ENCODE measurements at regions of chr19 and their contacts with region 1.

Region 1: DNA sequence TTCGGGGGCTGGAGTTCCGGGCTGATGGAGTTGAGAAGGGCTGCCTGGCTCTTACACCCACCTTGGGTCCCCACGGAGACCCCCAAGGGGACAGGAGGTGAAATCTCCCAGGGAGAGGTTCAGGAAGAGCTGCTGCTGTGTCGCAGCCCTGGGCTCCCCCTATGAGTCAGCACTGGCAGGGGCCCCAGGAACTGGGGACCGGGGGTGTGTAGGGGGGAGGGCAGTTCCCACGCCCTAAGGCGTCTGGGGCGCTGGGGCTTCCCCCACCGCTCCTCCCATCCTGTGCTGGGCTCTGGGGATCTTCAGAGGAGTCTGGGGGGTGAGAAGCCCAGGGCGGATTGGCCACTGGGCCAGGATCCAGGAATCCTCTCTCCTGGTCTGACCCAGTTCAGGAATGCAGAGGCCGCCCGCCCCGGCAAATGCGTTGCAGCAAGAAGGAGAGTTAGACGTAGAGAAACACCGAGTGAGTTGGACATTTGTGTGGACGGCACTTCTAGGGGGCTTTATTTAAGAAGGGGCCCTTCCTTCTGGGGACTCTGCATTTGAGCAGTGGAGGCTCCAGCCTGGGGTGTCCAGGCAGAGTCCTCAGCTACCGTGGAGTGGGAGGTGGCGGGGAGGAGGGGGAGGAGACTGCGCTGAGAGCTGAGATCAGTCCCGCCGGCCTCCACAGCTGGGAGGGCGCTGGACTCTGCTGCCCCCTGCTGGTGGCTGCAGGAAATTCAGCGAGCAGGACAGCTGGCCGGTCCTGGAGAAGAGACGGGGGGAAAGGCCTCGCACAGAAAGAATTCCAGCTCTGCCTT is 15.0 kb upstream of the NANOS3 start:
- DNase-seq: peak; percentile 72 to 93 (median 84)
- ATAC-seq: peak; percentile 87 to 89 (median 88)
- H3K4me3 ChIP-seq: peak overlapping the region; percentile 66 to 82
- H3K4me3 Mint-ChIP-seq: peak overlapping the region; percentile 84 to 90 (median 86)
- H3K27ac ChIP-seq: peak overlapping the region; percentile 99
- H3K27ac Mint-ChIP-seq: peak overlapping the region; percentile 88 to 92
- H3K4me1 ChIP-seq: peaks cover 3 to 42% of the 10 kb centered on the region in 2 experiments
- H3K4me1 Mint-ChIP-seq: peaks cover 39 to 47% (median 47%) of the 10 kb centered on the region in 3 donors
- H3K27me3 ChIP-seq: peaks cover 0 to 31% of the 10 kb centered on the region in 2 experiments
- H3K27me3 Mint-ChIP-seq: peaks cover 15 to 22% of the 10 kb centered on the region in 2 donors

Region 2: GRCh38 chr19:13774217-13775191 is 87.4 kb before region 1 on chr19 and contains the start of gene C19orf53:
- CTCF ChIA-PET with region 1: interaction called, 4 to 13 read pairs
- POLR2A ChIA-PET with region 1: no interaction called
- DNase-seq: peak; percentile 70 to 92 (median 82)
- ATAC-seq: peak; percentile 95 to 99 (median 99)
- H3K4me3 ChIP-seq: peak within 1 kb of the TSS; percentile 69 to 87
- H3K4me3 Mint-ChIP-seq: peak within 1 kb of the TSS; percentile 96 to 100 (median 98)
- H3K27ac ChIP-seq: peak within 1 kb of the TSS; percentile 67
- H3K27ac Mint-ChIP-seq: peak within 1 kb of the TSS; percentile 92 to 97
- H3K4me1 ChIP-seq: peaks cover 9 to 27% of the 10 kb centered on the region in 2 experiments
- H3K4me1 Mint-ChIP-seq: peaks cover 25 to 29% (median 28%) of the 10 kb centered on the region in 3 donors
- H3K27me3 ChIP-seq: no peaks in the 10 kb centered on the region
- H3K27me3 Mint-ChIP-seq: no peaks in the 10 kb centered on the region
- total RNA-seq, gene C19orf53: 69.7 to 82.1 (median 76.8) TPM

Region 3: GRCh38 chr19:13784731-13785452 is 77.0 kb before region 1 on chr19:
- CTCF ChIA-PET with region 1: interaction called, 11 to 31 read pairs
- POLR2A ChIA-PET with region 1: interaction called, 7 to 10 read pairs
- DNase-seq: peak; percentile 31 to 82 (median 66)
- ATAC-seq: peak; percentile 67 to 81 (median 75)
- H3K4me3 ChIP-seq: no peak overlapping the region
- H3K4me3 Mint-ChIP-seq: peak overlapping the region; percentile 17 to 59 (median 34)
- H3K27ac ChIP-seq: no peak overlapping the region
- H3K27ac Mint-ChIP-seq: peak overlapping the region; percentile 76 to 79
- H3K4me1 ChIP-seq: peaks cover 9 to 49% of the 10 kb centered on the region in 2 experiments
- H3K4me1 Mint-ChIP-seq: peaks cover 35 to 45% (median 37%) of the 10 kb centered on the region in 3 donors
- H3K27me3 ChIP-seq: peaks cover 0 to 2% of the 10 kb centered on the region in 2 experiments
- H3K27me3 Mint-ChIP-seq: no peaks in the 10 kb centered on the region

Region 4: GRCh38 chr19:13839130-13839937 is 22.6 kb before region 1 on chr19:
- CTCF ChIA-PET with region 1: interaction called, 5 to 10 read pairs
- POLR2A ChIA-PET with region 1: interaction called, 7 to 8 read pairs
- DNase-seq: peak; percentile 45 to 86 (median 72)
- ATAC-seq: peak; percentile 35 to 50 (median 42)
- H3K4me3 ChIP-seq: peak overlapping the region; percentile 60 to 74
- H3K4me3 Mint-ChIP-seq: peak overlapping the region; percentile 83 to 90 (median 86)
- H3K27ac ChIP-seq: peak overlapping the region; percentile 100
- H3K27ac Mint-ChIP-seq: peak overlapping the region; percentile 97 to 98
- H3K4me1 ChIP-seq: peaks cover 43 to 92% of the 10 kb centered on the region in 2 experiments
- H3K4me1 Mint-ChIP-seq: peaks cover 58 to 73% (median 61%) of the 10 kb centered on the region in 3 donors
- H3K27me3 ChIP-seq: no peaks in the 10 kb centered on the region
- H3K27me3 Mint-ChIP-seq: no peaks in the 10 kb centered on the region

Region 5: DNA sequence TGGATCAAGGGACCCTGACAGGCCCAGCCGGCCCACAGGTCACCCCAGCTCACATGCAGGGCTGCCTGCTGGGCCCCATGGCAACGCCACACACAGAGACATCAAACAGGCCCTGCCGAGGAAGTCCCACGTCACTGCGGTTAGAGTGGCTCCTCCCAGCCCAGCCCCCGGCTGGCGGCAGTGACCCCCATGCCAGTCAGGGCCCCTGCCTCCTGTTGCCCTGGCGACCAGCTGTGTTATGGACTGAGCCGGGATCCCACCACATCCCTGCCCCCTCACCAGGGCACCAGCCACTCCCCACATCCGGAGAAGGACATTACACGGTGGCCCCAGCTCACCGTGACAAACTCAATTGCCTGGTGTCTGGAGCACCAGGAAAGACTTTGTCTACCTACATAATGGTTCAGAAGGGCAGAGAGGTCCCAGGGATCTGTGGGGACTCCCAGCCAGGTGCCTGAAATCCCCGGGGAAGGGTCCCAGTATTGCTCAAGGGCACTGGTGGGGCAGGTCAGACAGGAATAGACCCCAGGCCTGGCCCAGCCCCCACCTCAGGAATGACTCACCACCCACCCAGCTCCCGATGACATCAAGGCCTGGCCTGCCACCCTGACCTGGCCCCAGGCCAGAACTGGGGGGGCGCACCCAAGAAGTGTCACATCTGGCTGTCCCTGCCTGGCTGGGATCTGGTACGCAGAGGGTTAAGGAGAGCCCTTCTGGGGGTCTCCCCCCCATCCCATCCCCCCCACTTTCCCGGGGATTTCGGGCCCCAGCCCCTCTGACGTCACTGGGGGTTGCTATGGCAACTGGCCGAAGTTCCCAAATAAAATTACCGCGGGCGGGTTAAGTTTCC is 15.2 kb before region 1 on chr19:
- CTCF ChIA-PET with region 1: interaction called, 5 to 8 read pairs
- POLR2A ChIA-PET with region 1: interaction called in 1 of 2 experiments, 10 read pairs
- DNase-seq: peak; percentile 74 to 99 (median 97)
- ATAC-seq: peak; percentile 67 to 76 (median 72)
- H3K4me3 ChIP-seq: peak overlapping the region; percentile 66 to 67
- H3K4me3 Mint-ChIP-seq: peak overlapping the region; percentile 83 to 84 (median 84)
- H3K27ac ChIP-seq: peak overlapping the region; percentile 100
- H3K27ac Mint-ChIP-seq: peak overlapping the region; percentile 99 to 100
- H3K4me1 ChIP-seq: peaks cover 17 to 88% of the 10 kb centered on the region in 2 experiments
- H3K4me1 Mint-ChIP-seq: peaks cover 44 to 66% (median 61%) of the 10 kb centered on the region in 3 donors
- H3K27me3 ChIP-seq: peaks cover 0 to 2% of the 10 kb centered on the region in 2 experiments
- H3K27me3 Mint-ChIP-seq: no peaks in the 10 kb centered on the region

Region 6: DNA sequence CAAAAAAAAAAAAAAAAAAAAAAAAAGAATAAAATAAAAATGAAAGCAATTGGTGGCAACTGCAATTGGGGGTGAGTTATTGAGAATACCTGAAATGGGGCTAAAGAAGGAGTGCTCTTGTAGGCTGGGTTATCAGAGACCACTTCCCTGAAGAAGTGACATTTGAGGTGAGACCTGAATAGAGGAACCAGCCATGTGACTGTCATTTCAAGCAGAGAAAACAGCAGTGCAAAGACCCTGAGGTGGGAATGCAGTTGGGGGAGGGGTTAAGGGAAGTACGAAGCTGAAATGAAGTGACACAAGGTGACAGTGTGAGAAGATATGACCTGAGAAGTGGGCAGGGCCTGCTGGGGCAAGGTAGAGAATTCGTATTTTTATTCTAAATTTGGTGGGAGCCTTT is 204.2 kb after region 1 on chr19:
- CTCF ChIA-PET with region 1: interaction called, 3 to 11 read pairs
- POLR2A ChIA-PET with region 1: no interaction called
- DNase-seq: no peak
- ATAC-seq: peak in 1 of 4 experiments; percentile 14
- H3K4me3 ChIP-seq: no peak overlapping the region
- H3K4me3 Mint-ChIP-seq: no peak overlapping the region
- H3K27ac ChIP-seq: no peak overlapping the region
- H3K27ac Mint-ChIP-seq: no peak overlapping the region
- H3K4me1 ChIP-seq: no peaks in the 10 kb centered on the region
- H3K4me1 Mint-ChIP-seq: peaks cover 0 to 2% (median 0%) of the 10 kb centered on the region in 3 donors
- H3K27me3 ChIP-seq: peaks cover 0 to 21% of the 10 kb centered on the region in 2 experiments
- H3K27me3 Mint-ChIP-seq: peaks cover 0 to 7% of the 10 kb centered on the region in 2 donors